ENCODE measurements at regions of chr17 and their contacts with region 1.

Region 1: GRCh38 chr17:951325-952132 is 28.0 kb downstream of the NXN start:
- DNase-seq: no peak
- ATAC-seq: peak; percentile 66 to 84

Region 2: DNA sequence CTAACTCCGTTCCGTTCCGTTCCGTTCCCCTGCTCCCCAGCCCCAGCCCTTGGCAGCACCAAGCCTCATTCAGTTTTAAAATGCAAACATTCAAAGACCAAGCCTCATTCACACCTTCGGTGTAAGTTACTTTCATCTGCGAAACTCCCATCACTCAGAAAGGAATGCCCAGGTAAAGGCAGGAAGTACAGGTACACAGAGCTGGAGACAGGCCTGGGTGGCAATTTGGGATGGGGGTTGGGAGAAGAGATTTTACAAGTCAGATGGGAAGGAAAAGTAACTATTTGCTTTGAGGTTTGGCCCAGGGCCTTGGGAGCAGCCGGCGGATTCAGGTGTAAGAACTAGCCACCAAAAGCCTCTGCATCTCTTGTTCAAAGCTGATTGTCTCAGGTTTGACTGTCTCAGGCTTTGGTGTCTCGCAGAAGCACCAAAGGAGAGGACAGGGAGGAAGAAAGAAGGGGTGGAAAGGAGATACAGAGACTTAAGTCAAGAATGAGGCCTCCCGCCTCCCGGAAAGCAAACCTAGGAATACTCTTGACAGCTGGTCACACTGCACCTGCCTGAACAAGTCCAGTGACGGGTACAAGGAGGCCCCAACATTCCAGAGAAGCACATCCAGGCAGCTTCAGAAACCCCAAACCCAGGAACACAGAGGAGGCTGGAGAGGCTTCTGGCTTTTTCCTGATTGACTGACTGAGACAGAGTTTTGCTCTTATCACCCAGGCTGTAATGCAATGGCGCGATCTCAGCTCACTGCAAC is 26.6 kb before region 1 on chr17:
- intact Hi-C with region 1: loop called in 1 of 2 experiments (anchors 2 kb)
- DNase-seq: no peak
- ATAC-seq: no peak